Heart left ventricle (tissue), 16 donors: ENCODE measurements at regions of chr2 and their contacts with region 1.

Region 1: DNA sequence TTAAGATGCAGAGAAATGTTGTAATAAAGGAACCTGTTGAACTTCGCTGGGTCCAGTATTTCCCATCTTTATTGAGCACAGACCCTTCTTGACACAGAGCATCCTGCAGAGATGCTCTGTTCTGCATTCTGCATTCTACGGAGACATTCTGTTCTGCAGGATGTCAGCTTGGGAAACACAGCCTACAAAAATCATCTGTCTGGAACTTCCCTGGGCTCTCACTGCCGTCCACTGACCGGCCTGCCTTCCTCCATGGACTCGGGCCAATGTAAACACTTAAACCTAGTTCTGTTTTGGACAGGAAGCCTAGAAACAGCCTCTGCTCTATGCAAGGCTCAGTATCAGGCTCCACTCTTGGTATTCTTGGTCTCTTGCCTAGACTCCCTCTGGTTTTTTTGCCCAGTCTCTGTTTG is 90.0 kb upstream of the PPP1CB start:
- DNase-seq: peak; percentile 74 to 80 (median 75)
- ATAC-seq: peak; percentile 73 to 83 (median 76)
- H3K4me3 ChIP-seq: no peak overlapping the region
- H3K27ac ChIP-seq: peak overlapping the region; percentile 34 to 85 (median 60)
- H3K4me1 ChIP-seq: peaks cover 8 to 62% (median 45%) of the 10 kb centered on the region in 12 donors
- H3K27me3 ChIP-seq: no peaks in the 10 kb centered on the region
- CTCF ChIP-seq: no peak
- POLR2A ChIP-seq: no peak

Region 2: GRCh38 chr2:28488858-28489575 is 172.6 kb before region 1 on chr2:
- intact Hi-C with region 1: no loop called
- DNase-seq: no peak
- ATAC-seq: no peak
- H3K4me3 ChIP-seq: no peak overlapping the region
- H3K27ac ChIP-seq: no peak overlapping the region
- H3K4me1 ChIP-seq: no peaks in the 10 kb centered on the region
- H3K27me3 ChIP-seq: no peaks in the 10 kb centered on the region
- CTCF ChIP-seq: no peak
- POLR2A ChIP-seq: no peak

Region 3: DNA sequence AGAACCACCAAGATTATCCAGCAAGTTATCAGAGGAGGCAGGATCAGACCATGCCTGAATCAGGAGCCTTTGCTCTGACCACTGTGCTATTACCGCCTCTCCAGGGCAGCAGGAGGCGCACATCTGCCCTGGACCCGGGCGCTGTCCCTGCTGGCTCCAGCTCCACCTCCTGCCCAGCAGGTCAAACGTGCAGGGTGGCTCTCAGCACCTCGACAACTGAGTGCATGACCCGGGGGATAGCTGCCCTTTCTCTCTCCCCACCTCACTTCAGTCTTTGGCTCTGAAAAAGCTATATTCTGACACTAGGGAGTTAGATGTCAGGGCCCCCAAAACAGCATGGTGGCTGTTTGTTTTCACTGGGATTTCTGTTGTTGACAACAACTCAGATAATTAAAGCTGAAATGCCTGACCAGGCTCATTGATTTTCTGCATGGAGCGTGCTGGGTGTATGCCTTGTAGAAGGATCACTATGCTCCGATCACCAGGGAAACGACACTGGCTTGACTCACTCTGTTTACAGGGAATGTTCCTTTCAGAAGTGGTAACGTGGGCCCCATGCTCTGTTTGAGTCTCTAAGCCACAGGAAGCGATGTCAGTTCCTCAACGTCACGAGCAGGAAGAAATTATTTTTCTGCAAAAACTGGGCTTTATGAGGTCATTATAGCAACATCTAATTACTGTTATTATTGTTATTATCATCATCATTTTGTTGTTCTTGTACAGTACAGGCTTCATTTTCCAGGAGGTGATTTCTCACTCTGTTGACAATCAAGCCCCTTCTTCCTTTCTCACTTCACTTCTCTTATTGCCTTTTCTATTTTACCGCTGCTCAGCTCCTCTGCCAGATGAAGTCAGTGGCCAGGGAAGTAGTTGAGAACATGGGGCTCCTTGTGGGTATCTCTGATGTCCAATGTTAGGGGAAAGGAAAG is 40.2 kb before region 1 on chr2:
- intact Hi-C with region 1: loop called in 3 of 10 experiments (anchors 5 kb)
- DNase-seq: peak; percentile 60 to 76 (median 69)
- ATAC-seq: peak; percentile 80 to 93 (median 84)
- H3K4me3 ChIP-seq: peak overlapping the region in 1 of 12 donors; percentile 12
- H3K27ac ChIP-seq: peak overlapping the region; percentile 49 to 93 (median 72)
- H3K4me1 ChIP-seq: peaks cover 0 to 56% (median 40%) of the 10 kb centered on the region in 12 donors
- H3K27me3 ChIP-seq: no peaks in the 10 kb centered on the region
- CTCF ChIP-seq: peak in 9 of 12 donors; percentile 17 to 43 (median 24)
- POLR2A ChIP-seq: no peak

Region 4: DNA sequence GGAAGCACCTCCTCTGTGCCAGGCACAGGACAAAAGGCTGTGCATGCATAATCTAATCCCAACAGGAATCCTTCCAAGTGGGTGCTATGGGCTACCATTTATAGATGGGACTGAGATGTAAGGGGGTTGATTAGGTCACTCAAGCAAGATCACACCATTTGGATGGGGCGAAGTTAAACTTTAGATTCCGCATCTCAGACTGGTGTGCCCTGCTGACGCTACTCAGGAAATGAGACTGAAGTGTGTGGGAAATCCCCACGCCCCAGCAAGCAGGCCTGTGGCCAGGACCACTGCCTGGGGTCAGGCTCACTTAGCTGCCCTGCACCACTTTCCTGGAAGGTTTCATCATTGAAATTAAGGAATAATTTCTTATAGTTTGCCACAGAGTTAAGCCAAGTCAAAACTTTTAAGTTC is 19.6 kb after region 1 on chr2:
- intact Hi-C with region 1: loop called in 1 of 10 experiments (anchors 1 kb)
- DNase-seq: peak in 2 of 5 donors; percentile 42 to 46
- ATAC-seq: peak in 1 of 4 donors; percentile 52
- H3K4me3 ChIP-seq: no peak overlapping the region
- H3K27ac ChIP-seq: peak overlapping the region in 10 of 12 donors; percentile 8 to 83 (median 74)
- H3K4me1 ChIP-seq: peaks cover 14 to 74% (median 52%) of the 10 kb centered on the region in 12 donors
- H3K27me3 ChIP-seq: no peaks in the 10 kb centered on the region
- CTCF ChIP-seq: no peak
- POLR2A ChIP-seq: no peak